ENCODE measurements at regions of chr15 and their contacts with region 1.

Region 1: DNA sequence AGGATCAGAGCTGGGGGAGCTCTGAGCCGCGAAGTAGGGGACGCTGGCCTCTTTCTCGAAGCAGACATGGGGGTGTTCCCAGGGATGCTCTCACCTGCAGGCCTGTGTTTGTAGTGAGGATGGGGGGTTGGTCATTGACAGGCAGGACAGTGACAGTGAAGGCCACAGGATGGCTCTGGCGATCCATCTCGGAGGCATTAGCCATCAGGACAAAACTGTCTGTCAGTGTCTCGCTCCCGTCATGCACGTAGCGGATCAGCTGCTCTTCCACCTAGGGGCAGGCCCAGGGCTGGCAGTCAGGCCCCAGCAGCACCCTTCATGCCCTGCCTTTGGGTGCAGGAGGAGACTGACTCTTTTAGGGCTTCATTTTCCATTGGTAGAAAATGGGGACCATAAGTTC is 28.0 kb downstream of the CSPG4 start:
- DNase-seq: no peak
- ATAC-seq: no peak
- H3K4me3 ChIP-seq: no peak overlapping the region
- H3K27ac ChIP-seq: no peak overlapping the region
- H3K4me1 ChIP-seq: no peaks in the 10 kb centered on the region
- H3K27me3 ChIP-seq: no peaks in the 10 kb centered on the region
- CTCF ChIP-seq: no peak
- EP300 ChIP-seq: no peak
- POLR2A ChIP-seq: no peak
- RAD21 ChIP-seq: no peak

Region 2: DNA sequence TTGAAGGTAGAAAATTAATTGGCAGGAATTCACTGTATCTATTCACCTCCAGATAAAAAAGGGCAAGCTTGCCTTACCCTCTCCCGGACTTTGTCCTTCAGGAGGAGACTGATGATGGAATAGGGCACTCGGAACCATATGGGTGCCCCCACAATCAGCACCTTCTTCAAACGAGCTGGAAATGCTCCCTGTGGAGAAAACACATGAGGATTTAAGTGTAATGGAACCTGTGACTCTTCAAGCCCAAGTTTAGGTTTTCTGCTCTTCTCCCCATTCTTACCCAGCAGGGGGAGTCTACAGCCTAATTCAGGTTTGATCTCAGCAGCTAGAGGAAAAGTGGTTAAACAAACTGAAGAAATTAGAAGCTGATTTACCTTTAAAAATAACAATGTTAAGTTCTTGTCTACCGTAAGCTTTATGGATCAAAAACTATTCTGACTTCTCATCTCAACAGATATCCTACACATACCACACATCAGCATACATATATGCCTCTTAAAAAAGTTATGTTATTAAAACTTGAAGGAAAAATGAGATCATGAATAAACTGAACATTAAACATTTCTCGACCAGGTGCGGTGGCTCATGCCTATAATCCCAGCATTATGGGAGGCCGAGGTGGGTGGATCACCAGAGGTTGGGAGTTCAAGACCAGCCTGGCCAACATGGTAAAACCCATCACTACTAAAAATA is 175.7 kb before region 1 on chr15:
- CTCF ChIA-PET with region 1: interaction called, 10 read pairs
- POLR2A ChIA-PET with region 1: no interaction called
- RAD21 ChIA-PET with region 1: interaction called, 3 read pairs
- SMC1A ChIA-PET with region 1: interaction called, 3 read pairs
- in situ Hi-C with region 1: no loop called
- intact Hi-C with region 1: no loop called
- DNase-seq: no peak
- ATAC-seq: 0 out of 3 replicates have a peak, but pooled peaks have one; percentile 31
- H3K4me3 ChIP-seq: no peak overlapping the region
- H3K27ac ChIP-seq: no peak overlapping the region
- H3K4me1 ChIP-seq: no peaks in the 10 kb centered on the region
- H3K27me3 ChIP-seq: no peaks in the 10 kb centered on the region
- CTCF ChIP-seq: peak; percentile 50 to 54 (median 52); a peak in 5 of 6 replicates
- EP300 ChIP-seq: no peak
- POLR2A ChIP-seq: no peak
- RAD21 ChIP-seq: peak; percentile 64

Region 3: GRCh38 chr15:75718321-75718720 is 33.7 kb after region 1 on chr15:
- CTCF ChIA-PET with region 1: interaction called, 42 read pairs
- POLR2A ChIA-PET with region 1: interaction called, 4 read pairs
- RAD21 ChIA-PET with region 1: interaction called, 49 read pairs
- SMC1A ChIA-PET with region 1: interaction called, 10 read pairs
- in situ Hi-C with region 1: no loop called
- intact Hi-C with region 1: no loop called
- DNase-seq: no peak
- ATAC-seq: no peak
- H3K4me3 ChIP-seq: no peak overlapping the region
- H3K27ac ChIP-seq: no peak overlapping the region
- H3K4me1 ChIP-seq: no peaks in the 10 kb centered on the region
- H3K27me3 ChIP-seq: peaks cover 0 to under 1% of the 10 kb centered on the region in 2 experiments; a peak in 2 of 4 replicates
- CTCF ChIP-seq: no peak
- EP300 ChIP-seq: no peak
- POLR2A ChIP-seq: no peak
- RAD21 ChIP-seq: no peak

Region 4: DNA sequence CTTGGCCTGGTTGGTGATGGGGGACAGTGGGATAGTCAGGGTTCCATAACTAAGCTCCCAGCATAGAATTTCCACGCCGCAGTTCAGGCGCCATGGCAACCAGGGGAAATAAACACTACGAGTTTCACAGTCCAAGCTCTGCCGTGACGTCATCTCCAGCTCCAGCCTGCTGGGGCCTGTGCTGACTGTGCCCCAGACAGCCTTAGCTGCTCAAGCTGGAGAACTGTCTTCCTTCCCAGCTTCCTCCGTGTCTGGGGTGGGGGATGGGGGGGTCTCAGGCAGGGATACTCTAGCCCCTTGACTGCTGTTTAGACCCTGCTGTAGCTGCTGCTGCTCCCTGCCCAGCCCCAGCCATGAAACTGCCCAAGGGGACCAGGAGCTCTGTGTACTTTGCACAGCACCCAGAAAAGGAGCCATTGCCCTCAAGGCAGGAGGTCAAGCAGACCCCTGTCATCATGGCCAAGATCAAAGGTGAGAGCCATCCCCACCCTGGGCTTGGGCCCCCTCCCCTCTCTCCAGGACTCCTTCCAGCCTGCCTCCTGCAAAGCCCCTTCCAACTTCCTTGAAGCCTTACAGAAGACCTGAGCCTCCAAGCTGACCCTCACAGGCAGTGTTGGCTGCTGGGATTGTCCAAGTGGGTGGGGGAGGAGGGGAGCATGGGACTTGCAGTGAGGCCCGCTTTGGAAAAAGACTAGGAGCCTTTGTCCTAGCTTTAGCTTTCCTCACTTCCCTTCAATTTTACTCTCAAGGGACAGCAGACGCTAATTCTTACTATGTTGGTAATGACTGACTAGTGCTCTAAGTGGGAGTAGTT is 39.4 kb after region 1 on chr15:
- CTCF ChIA-PET with region 1: interaction called, 42 read pairs
- POLR2A ChIA-PET with region 1: interaction called, 4 read pairs
- RAD21 ChIA-PET with region 1: interaction called, 49 read pairs
- SMC1A ChIA-PET with region 1: interaction called, 10 read pairs
- in situ Hi-C with region 1: no loop called
- intact Hi-C with region 1: no loop called
- DNase-seq: no peak
- ATAC-seq: peak; percentile 86
- H3K4me3 ChIP-seq: no peak overlapping the region
- H3K27ac ChIP-seq: no peak overlapping the region
- H3K4me1 ChIP-seq: peaks cover 3% of the 10 kb centered on the region; the same call in 1 of the 2 replicates
- H3K27me3 ChIP-seq: no peaks in the 10 kb centered on the region
- CTCF ChIP-seq: no peak
- EP300 ChIP-seq: peak in 1 of 2 experiments; percentile 37; a peak in 1 of 4 replicates
- POLR2A ChIP-seq: no peak
- RAD21 ChIP-seq: no peak

Region 5: DNA sequence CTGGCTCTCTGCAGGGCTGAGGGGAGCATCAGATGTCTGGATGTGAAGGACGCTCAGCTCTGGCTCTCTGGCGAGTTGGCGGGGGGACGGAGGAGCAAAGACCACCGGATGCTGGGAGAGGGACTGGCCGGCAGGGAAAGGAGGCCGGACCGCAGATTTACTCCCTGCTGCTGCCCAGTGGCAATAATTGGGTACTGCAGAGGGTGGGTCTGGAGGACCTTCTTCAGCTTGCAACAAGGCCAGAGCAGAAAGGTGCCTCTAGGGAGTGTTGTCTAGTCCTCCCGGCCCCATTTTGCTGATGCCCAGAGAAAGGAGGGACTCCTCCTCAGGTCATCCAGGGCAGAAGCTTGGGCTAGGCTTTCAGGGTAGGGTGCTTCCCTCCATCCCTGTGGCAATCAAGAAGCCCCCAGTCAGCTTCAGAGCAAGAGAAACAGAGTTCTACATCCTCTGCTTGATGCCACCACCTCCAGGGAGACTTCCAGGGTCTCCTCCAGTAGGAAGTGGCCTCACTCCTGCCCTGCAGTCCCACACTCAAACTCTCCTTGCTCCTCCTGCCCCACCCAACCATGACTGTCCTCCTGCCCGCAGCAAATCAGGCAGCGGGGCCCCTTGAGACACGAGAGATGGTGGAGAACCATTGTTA is 48.3 kb after region 1 on chr15:
- CTCF ChIA-PET with region 1: interaction called, 13 read pairs
- POLR2A ChIA-PET with region 1: no interaction called
- RAD21 ChIA-PET with region 1: interaction called, 13 read pairs
- SMC1A ChIA-PET with region 1: no interaction called
- in situ Hi-C with region 1: no loop called
- intact Hi-C with region 1: loop called (anchors 5 kb)
- DNase-seq: no peak
- ATAC-seq: peak; percentile 81
- H3K4me3 ChIP-seq: no peak overlapping the region
- H3K27ac ChIP-seq: no peak overlapping the region
- H3K4me1 ChIP-seq: no peaks in the 10 kb centered on the region
- H3K27me3 ChIP-seq: no peaks in the 10 kb centered on the region; a peak in 1 of 4 replicates
- CTCF ChIP-seq: peak; percentile 66 to 86 (median 77)
- EP300 ChIP-seq: no peak
- POLR2A ChIP-seq: no peak
- RAD21 ChIP-seq: peak; percentile 49; the same call in 1 of the 2 replicates

Measured in GM12878 (cell line).